Activated CD4-positive, alpha-beta memory T cell treated with anti-CD3 and anti-CD28 coated beads for 36 hours (primary cell): ENCODE measurements at regions of chr15 and their contacts with region 1.

Region 1: GRCh38 chr15:92938387-92938786 is 38.3 kb downstream of the CHD2 start:
- DNase-seq: no peak
- H3K4me3 Mint-ChIP-seq: no peak overlapping the region
- H3K27ac Mint-ChIP-seq: peak overlapping the region; percentile 33
- H3K4me1 Mint-ChIP-seq: peaks cover 69% of the 10 kb centered on the region
- H3K27me3 Mint-ChIP-seq: no peaks in the 10 kb centered on the region

Region 2: DNA sequence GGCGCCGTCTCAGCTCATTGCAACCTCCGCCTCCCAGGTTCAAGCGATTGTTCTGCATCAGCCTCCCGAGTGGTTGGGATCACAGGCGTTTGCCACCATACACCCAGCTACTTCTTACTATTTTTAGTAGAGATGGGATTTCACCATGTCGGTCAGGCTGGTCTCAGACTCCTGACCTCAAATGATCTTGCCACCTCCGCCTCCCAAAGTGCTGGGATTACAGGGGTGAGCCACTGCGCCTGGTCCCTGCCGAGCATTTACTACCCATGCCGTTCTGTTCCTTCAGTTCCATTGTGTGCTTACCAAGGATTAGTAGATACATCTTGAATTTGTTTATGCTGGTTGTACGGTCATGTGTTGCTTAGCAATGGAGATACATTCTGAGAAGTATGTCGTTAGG is 27.9 kb before region 1 on chr15:
- CTCF ChIA-PET with region 1: interaction called, 3 read pairs
- POLR2A ChIA-PET with region 1: interaction called, 3 read pairs
- intact Hi-C with region 1: loop called (anchors 1 kb)
- DNase-seq: no peak
- H3K4me3 Mint-ChIP-seq: peak overlapping the region; percentile 40
- H3K27ac Mint-ChIP-seq: peak overlapping the region; percentile 75
- H3K4me1 Mint-ChIP-seq: peaks cover 90% of the 10 kb centered on the region
- H3K27me3 Mint-ChIP-seq: no peaks in the 10 kb centered on the region

Region 3: GRCh38 chr15:92992720-92993119 is 54.3 kb after region 1 on chr15:
- CTCF ChIA-PET with region 1: no interaction called
- POLR2A ChIA-PET with region 1: no interaction called
- intact Hi-C with region 1: loop called (anchors 5 kb)
- DNase-seq: no peak
- H3K4me3 Mint-ChIP-seq: no peak overlapping the region
- H3K27ac Mint-ChIP-seq: no peak overlapping the region
- H3K4me1 Mint-ChIP-seq: peaks cover 12% of the 10 kb centered on the region
- H3K27me3 Mint-ChIP-seq: no peaks in the 10 kb centered on the region